HepG2 (cell line): ENCODE measurements at regions of chr13 and their contacts with region 1.

Region 1: DNA sequence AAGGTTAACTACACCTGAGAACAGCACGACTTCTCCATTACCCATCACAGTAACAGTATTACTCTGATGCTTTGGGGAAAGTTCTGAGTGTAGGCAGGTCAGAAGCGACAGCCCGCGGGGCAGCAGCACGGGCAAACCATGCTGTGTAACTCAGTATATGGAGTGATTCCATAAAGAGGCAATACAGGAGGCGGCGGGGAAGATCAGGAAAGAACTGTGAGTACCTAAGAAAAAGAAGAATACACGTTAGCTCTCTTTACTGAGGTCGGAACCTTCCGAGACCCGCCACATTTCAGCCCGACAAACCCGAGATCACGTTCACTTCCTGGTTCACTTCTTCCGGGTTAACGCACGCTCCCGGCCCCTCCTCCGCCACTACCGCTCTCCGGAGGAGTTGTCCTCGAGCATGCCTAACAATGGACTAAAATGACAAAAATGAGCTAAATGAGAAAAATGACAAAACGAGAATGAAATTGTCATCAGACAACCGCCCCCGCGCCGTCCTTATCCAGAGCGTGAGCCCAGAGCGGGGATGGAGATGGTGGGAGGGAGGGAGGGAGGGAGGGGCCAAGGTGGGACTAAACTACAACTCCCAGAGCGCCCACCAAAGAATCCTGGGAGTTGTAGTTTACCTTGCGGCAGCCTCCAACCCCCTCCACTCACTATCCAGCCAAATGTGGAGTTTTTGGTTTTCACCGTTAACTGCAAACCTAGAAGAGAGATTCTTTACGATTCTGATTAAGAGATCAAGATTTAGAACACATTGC is at the start of gene MTRF1:
- DNase-seq: peak; percentile 69
- ATAC-seq: peak; percentile 93
- H3K4me3 ChIP-seq: peak within 1 kb of the TSS; percentile 66 to 88 (median 84)
- H3K27ac ChIP-seq: peak within 1 kb of the TSS; percentile 80
- H3K4me1 ChIP-seq: peaks cover 39% of the 10 kb centered on the region
- H3K27me3 ChIP-seq: no peaks in the 10 kb centered on the region; a peak in 1 of 5 replicates
- CTCF ChIP-seq: no peak
- EP300 ChIP-seq: no peak
- POLR2A ChIP-seq: peak; percentile 53 to 64; a peak in 3 of 4 replicates
- RAD21 ChIP-seq: 0 out of 2 replicates have a peak, but pooled peaks have one; percentile 12
- total RNA-seq, gene MTRF1: 24.0 and 27.2 TPM in 2 replicates

Region 2: DNA sequence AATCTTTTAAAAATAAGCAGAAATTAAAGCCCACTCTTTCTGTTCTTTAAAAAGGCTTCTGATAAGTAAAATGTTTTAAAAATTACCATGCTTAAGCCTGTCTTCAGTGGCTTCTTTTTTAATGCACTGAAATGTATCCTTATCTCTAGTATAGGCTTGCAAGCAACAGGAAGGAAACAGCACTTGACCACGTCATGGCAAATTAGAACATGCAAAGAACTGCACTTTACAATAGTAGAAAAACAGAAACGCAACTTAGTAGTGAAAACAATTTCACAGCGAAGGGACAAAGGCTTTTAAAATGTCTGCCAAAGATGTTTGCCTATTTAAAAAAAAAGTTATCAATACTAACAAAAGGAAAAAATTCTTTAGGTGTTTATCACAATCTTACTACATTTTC is 280.7 kb before region 1 on chr13:
- CTCF ChIA-PET with region 1: no interaction called
- POLR2A ChIA-PET with region 1: no interaction called
- in situ Hi-C with region 1: no loop called
- intact Hi-C with region 1: no loop called
- DNase-seq: no peak
- ATAC-seq: no peak
- H3K4me3 ChIP-seq: no peak overlapping the region
- H3K27ac ChIP-seq: no peak overlapping the region
- H3K4me1 ChIP-seq: peaks cover 41% of the 10 kb centered on the region
- H3K27me3 ChIP-seq: no peaks in the 10 kb centered on the region
- CTCF ChIP-seq: no peak
- EP300 ChIP-seq: no peak
- POLR2A ChIP-seq: no peak
- RAD21 ChIP-seq: no peak

Region 3: DNA sequence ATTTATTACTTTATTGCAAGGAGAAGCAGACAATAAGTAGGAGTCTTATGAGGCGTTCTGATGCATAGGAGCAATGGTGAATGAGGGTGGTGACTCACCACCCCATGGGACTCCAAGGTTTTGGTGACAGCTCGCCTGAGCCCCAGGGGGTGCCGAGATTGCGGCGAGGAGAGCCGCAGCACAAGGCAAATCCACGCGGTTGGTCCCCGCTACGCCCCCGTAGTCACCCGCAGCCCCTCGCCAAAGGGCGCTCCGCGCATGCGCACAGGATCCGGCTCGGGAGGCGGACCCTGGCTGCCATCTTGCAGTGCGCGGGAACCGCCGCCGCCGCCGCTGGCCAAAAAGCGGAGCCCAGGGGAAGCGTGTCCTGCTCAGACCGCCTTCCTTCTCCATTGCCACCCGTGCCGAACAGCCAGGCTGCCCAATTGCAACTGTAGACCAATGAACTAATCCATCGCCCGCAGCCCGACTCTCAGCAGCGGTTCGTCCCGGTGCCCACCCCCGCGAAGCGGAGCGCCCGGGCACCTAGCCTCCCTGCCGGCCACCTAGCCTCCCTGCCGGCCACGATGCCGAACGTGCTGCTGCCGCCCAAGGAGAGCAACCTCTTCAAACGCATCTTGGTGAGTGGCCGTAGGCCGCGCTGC is 47.6 kb after region 1 on chr13 and contains the start of gene NAA16:
- CTCF ChIA-PET with region 1: no interaction called
- POLR2A ChIA-PET with region 1: interaction called, 3 read pairs
- in situ Hi-C with region 1: no loop called
- intact Hi-C with region 1: loop called (anchors 1 kb)
- DNase-seq: peak; percentile 72
- ATAC-seq: peak; percentile 88
- H3K4me3 ChIP-seq: peak within 1 kb of the TSS; percentile 94 to 99 (median 98)
- H3K27ac ChIP-seq: peak within 1 kb of the TSS; percentile 89
- H3K4me1 ChIP-seq: peaks cover 60% of the 10 kb centered on the region
- H3K27me3 ChIP-seq: no peaks in the 10 kb centered on the region; a peak in 1 of 5 replicates
- CTCF ChIP-seq: no peak
- EP300 ChIP-seq: no peak
- POLR2A ChIP-seq: peak; percentile 68 to 88
- RAD21 ChIP-seq: peak; percentile 48
- total RNA-seq, gene NAA16: 9.0 and 15.1 TPM in 2 replicates